BJ (cell line): ENCODE measurements at regions of chr14 and their contacts with region 1.

Region 1: GRCh38 chr14:67571272-67571850 is 28.7 kb downstream of the PIGH start:
- DNase-seq: no peak
- H3K4me3 ChIP-seq: no peak overlapping the region
- H3K27me3 ChIP-seq: no peaks in the 10 kb centered on the region; the same call in 1 of the 2 replicates
- CTCF ChIP-seq: peak; percentile 94

Region 2: GRCh38 chr14:67411820-67412421 is 159.4 kb before region 1 on chr14 and contains the start of gene PLEK2:
- CTCF ChIA-PET with region 1: interaction called, 21 read pairs
- POLR2A ChIA-PET with region 1: no interaction called
- DNase-seq: no peak
- H3K4me3 ChIP-seq: peak within 1 kb of the TSS; percentile 44
- H3K27me3 ChIP-seq: no peaks in the 10 kb centered on the region
- CTCF ChIP-seq: no peak
- polyA plus RNA-seq, gene PLEK2: 2.2 and 3.1 TPM in 2 replicates

Region 3: DNA sequence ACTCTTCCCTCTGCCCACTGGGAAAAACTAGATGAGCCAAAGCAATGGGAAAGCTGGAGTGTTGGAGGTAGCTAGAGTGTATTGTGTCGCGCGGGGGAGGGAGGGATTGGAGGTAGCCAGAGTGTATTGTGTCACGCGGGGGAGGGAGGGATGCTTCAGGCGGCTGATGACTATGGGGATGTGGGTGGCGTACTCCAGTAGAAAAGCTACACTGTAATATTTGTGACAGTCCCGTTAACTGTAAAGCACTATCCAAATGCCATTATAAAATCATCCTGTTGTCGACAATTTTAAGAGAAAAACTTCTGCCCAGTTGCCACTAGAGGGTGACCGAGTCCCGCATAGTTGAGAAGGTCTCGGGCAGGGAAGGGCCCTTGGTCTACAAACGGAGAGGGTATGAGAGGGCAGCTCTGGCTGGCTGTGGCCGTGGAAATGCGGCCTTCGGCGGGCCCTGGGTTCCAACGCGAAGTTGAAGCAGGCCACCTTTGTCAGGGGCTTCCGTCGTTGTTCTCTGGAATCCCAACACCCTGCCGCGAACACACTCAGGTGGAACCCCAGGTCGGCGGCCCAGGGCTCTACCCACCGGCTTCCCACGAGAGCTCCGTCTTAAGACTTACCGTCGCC is 144.3 kb before region 1 on chr14:
- CTCF ChIA-PET with region 1: interaction called, 280 read pairs
- POLR2A ChIA-PET with region 1: no interaction called
- DNase-seq: no peak
- H3K4me3 ChIP-seq: no peak overlapping the region
- H3K27me3 ChIP-seq: no peaks in the 10 kb centered on the region; the same call in 1 of the 2 replicates
- CTCF ChIP-seq: peak; percentile 88

Region 4: DNA sequence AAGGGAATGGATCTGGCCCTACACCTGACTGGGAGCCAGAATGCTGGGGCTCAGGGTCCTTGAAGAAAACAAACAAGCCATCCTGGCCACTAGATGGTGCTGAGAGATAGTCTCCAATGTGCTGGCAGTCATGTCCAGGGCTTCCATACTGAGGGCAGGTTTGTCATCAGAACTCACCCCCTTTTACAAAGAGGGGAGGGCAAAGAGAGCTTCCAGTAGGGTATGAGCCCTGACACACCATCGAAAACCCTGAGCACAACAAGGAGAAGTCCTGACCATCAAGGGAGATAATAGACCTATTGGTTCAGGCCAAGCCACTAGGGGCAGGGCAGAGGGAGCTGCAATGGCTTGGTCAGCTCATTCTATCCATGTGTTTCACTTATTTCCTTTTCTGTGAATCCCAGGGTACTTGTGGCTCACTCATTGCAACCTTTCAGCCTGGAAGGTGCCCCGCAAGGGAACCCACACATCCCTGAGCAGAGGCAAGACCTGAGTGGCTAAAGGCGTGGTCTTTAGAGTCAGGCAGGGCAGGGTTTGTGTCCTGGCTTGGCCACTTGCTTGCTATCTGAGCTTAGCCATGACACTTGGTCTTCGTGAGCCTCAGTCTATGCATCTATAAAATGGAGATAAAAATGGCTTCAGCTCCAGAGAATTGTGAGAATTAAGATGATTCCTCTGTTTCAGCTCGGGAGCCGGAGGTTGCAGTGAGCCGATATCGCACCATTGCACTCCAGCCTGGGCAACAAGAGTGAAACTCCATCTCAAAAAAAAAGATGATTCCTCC is 44.5 kb before region 1 on chr14:
- CTCF ChIA-PET with region 1: interaction called, 96 read pairs
- POLR2A ChIA-PET with region 1: no interaction called
- DNase-seq: no peak
- H3K4me3 ChIP-seq: no peak overlapping the region
- H3K27me3 ChIP-seq: peaks cover 16% of the 10 kb centered on the region
- CTCF ChIP-seq: peak; percentile 77

Region 5: DNA sequence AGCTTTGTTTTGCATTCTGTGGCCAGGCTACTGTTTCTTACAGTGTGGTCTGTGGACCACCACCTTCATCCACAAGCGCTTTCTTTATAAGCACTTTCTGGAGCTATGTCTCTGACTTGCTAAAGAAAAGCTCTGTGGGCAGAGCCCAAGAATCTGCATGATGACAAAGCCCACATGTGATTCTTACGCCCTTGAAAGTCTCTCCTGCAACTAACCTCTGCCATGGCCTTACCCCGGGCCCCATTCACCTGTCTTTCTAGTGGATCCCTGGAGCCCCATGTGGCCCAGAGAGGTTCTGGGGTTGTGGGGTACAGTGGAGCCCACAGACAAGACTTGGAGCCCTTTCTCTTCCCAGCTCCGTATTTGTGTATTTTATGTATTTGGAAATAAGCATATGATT is 21.6 kb before region 1 on chr14:
- CTCF ChIA-PET with region 1: interaction called, 10 read pairs
- POLR2A ChIA-PET with region 1: no interaction called
- DNase-seq: no peak
- H3K4me3 ChIP-seq: no peak overlapping the region
- H3K27me3 ChIP-seq: peaks cover 4% of the 10 kb centered on the region; the same call in 1 of the 2 replicates
- CTCF ChIP-seq: no peak

Region 6: DNA sequence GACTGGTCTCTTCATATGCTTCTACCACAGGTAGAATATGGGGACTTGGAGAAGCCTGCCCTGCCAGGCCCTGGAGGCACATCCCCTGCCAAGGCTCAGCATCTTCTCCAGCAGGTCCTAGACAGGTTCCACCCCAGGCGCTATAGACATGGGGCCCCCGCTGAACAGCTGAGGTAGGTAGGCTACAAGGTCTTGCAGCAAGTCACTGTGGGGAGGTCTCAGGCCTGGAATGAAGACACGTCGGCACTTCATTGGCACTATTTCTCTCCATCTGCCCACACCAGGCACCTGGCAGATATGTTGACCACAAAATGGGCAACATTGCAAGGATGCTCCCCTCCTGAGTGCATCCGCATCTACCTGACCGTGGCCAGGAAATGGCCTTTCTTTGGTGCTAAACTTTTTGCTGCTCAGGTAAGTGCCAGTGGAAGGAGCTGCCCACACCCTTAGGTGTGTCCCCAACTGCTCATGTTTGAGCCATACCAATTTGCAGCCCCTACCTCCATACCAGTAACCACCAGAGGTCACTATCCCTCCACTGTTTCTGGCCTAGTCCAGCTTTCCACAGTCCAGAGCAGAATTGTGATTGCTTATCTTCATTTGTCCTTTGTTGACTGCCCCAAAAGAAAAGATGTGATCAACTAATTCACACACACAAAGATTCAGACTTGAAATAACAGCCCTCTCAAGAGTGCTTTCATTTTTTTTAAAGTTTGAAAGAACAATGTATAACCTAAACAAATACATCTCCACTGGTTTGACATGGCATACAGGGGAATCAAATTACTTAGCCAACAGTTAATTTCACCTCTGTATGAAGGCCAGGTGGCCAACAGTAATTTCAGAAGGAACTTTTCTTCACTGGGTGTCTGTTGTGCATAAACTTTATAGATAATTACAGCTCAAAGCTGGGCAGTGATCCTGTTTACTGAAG is 12.6 kb after region 1 on chr14:
- CTCF ChIA-PET with region 1: interaction called, 84 read pairs
- POLR2A ChIA-PET with region 1: no interaction called
- DNase-seq: no peak
- H3K4me3 ChIP-seq: no peak overlapping the region
- H3K27me3 ChIP-seq: no peaks in the 10 kb centered on the region
- CTCF ChIP-seq: peak; percentile 79